Left cardiac atrium (tissue), 4 donors: ENCODE measurements at regions of chr7 and their contacts with region 1.

Region 1: GRCh38 chr7:75914730-75915585 is at the start of gene POR:
- DNase-seq: peak; percentile 94
- ATAC-seq: peak; percentile 100
- total RNA-seq, gene POR: 60.6 to 128 TPM

Region 2: GRCh38 chr7:75962607-75963380 is 47.8 kb after region 1 on chr7:
- intact Hi-C with region 1: loop called in 1 of 2 experiments (anchors 5 kb)
- DNase-seq: peak; percentile 75
- ATAC-seq: peak; percentile 50